GM10248 (cell line): ENCODE measurements at regions of chr11 and their contacts with region 1.

Region 1: GRCh38 chr11:121367001-121367843 is 74.7 kb downstream of the SC5D start:
- DNase-seq: peak; percentile 73
- CTCF ChIP-seq: no peak

Region 2: DNA sequence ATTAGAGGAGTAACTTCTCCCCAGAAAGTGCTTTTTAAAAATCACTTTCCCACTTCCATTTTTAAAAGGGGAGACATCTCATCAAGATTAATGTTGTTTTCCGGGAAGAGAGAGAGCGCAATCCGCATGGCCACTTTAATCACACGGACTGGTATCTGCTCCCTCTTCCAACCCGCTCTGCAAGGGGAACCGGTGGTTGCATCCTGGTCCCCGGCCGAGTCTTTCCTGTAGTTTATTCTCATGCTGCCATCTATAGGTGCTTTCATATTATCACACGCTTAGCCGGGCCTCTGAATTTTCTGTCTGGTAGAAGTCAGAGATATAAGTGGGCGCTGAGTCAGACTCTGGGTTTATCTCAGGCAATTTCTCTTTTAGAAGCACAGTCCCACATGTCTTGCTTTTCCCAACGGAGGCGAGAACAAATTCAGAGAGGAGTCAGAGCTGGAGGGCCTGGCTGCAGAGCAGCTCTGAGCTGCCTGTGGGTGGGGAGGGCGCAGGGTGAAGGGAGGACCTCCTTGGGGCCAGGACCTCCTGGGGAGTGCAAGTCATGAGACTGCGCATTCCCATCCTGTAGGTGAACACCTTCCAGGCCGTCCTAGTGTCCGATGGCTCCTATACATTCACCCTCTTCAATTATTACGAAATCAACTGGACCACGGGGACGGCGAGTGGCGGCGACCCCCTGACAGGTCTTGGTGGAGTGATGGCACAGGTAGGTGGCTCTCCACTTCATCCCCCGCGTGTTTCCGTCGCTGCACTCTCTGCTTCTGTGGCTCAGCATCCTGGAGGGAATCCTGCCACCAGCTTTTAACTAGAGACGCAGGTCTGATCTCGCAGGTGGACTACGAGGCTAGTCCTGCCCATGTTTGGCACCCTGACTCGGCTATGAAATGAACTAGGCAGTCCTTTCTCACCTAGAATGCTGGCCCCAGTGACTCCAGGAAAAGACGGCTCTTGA is 254.4 kb before region 1 on chr11:
- CTCF ChIA-PET with region 1: no interaction called
- POLR2A ChIA-PET with region 1: no interaction called
- DNase-seq: peak; percentile 73
- CTCF ChIP-seq: peak; percentile 54

Region 3: DNA sequence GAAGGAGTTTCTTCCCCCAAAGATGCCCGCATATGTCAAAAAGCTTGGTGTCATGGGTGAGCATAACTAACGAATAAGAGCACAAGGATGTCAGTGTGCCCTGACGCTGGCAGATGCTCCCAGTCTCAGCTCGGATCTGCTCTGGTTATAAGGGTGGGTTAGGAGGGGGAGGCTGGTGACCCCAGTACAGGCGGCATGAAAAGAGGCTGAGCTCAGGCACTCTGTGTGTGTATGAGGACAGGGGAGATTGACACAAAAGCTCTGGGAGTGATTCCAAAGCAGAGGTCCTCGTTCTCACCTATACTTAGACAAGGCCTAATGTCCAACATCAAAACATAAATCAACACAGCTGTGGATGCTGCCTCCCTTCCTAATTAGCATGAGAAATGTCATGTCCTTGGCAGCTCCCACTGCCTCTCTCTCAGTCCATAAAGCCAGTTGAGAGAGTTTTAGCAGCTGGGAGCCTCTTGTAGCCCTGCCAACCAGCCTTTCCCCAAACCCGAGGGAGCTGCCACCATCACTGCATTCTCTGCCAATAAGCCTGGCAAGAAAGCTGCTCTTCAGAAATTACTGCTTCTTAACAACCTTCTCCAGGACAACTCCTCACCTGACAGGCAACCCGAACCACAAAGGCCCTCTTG is 14.9 kb before region 1 on chr11:
- CTCF ChIA-PET with region 1: interaction called, 51 read pairs
- POLR2A ChIA-PET with region 1: no interaction called
- DNase-seq: no peak
- CTCF ChIP-seq: no peak

Region 4: DNA sequence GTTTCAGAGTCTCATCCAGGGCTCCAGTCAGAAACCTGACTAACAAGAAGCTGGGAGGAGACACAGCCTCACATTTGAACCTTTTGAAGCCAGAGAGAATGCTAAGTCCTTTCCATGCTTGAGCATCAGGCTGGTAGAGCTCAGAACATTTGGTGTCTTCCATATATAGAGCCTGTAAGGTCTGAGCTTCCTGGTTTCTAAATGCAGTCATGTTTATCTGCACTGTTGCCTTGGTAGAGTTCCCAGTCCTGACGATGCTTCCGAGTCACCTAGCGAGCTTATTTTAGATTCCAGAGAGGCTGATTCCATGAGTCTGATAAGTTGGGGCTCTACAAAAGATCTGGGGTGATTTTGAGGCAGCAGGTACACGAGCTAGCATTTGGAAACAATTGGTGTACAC is 16.5 kb after region 1 on chr11:
- CTCF ChIA-PET with region 1: interaction called, 14 read pairs
- POLR2A ChIA-PET with region 1: no interaction called
- DNase-seq: no peak
- CTCF ChIP-seq: no peak

Region 5: GRCh38 chr11:121445071-121445768 is 78.0 kb after region 1 on chr11:
- CTCF ChIA-PET with region 1: interaction called, 10 read pairs
- POLR2A ChIA-PET with region 1: no interaction called
- DNase-seq: no peak
- CTCF ChIP-seq: no peak

Region 6: DNA sequence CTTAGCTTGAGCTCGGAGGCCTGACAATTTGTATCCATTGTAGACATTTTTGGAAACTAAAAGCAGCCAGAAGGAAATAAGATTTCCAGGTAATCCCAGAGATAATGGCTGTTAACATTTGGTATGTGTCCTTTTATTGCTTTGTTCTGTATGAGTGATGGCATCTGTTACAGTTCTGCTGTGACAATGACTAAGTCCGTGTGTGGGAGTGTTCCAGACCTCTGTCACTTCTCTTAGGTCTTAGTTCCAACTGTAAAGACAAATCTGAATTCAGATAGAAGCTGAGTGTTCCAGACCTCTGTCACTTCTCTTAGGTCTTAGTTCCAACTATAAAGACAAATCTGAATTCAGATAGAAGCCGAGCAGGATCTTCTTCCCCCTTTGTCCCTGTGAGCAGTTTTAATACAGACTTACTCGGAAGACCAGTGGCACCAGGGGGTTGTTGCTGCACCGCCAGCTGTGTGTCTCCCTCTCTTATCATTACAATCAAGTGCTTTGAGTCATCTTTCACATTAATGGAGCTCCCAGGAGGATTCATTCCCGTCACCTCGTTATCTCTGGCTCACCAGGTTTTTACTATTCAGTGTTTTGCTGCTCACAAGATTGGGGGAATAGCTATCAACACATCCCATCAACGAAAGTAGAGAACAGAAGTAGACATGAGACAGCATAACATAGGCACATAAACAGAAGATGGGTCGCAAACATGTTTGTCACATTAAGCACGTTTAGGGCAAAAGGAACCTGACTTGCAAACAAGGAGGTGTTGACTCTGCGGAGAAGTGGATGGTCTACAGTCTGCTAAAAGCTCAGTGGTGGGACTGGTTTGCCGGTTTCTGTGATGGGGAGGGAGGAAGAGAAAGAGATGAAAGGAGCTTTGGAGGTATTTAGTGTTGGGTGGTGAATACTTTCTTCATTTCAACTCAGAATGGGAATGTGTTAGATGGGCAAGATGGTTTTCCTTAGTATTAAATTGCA is 276.6 kb after region 1 on chr11:
- CTCF ChIA-PET with region 1: no interaction called
- POLR2A ChIA-PET with region 1: no interaction called
- DNase-seq: no peak
- CTCF ChIP-seq: no peak